Activated CD4-positive, alpha-beta memory T cell treated with anti-CD3 and anti-CD28 coated beads for 36 hours (primary cell): ENCODE measurements at regions of chrX and their contacts with region 1.

Region 1: DNA sequence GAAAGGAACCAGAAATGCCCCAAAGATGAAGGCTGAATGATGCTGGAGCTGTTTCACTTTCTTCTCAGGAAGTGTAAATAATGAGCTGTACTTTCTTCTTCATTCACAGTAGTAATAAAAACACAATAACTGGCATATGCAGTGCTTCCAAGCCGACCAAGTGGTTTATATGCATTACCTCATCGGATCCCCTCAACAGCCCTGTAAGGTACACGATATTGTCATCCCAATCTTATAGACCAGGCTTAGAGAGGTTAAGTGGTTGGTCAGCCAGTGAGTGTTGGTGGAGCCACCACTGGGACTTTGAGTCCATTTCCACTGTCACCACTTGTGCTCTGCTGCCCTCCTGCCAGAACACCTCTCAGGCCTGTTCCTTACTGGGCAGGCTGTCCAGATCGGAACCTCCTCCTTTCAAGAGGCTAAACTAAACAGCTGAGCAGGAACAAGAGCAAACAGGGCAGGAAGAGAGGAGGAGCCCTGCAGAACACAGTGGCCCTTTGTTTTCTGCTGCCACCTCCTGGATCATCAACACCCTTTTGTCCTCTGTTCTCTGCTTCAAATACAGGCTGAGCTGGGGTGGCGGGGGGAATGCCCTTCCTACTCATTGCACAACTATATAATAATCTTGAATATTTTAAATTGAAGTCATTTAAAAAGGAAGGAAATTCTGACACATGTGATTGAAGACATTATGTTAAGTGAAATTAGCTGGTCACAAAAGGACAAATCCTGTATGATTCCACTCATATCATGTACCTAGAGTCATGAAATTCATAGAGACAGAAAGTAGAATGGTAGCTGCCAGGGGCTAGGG is 112.5 kb upstream of the ATP6AP2 start:
- DNase-seq: peak; percentile 68
- H3K4me3 Mint-ChIP-seq: no peak overlapping the region
- H3K27ac Mint-ChIP-seq: no peak overlapping the region
- H3K4me1 Mint-ChIP-seq: peaks cover 29% of the 10 kb centered on the region
- H3K27me3 Mint-ChIP-seq: no peaks in the 10 kb centered on the region

Region 2: DNA sequence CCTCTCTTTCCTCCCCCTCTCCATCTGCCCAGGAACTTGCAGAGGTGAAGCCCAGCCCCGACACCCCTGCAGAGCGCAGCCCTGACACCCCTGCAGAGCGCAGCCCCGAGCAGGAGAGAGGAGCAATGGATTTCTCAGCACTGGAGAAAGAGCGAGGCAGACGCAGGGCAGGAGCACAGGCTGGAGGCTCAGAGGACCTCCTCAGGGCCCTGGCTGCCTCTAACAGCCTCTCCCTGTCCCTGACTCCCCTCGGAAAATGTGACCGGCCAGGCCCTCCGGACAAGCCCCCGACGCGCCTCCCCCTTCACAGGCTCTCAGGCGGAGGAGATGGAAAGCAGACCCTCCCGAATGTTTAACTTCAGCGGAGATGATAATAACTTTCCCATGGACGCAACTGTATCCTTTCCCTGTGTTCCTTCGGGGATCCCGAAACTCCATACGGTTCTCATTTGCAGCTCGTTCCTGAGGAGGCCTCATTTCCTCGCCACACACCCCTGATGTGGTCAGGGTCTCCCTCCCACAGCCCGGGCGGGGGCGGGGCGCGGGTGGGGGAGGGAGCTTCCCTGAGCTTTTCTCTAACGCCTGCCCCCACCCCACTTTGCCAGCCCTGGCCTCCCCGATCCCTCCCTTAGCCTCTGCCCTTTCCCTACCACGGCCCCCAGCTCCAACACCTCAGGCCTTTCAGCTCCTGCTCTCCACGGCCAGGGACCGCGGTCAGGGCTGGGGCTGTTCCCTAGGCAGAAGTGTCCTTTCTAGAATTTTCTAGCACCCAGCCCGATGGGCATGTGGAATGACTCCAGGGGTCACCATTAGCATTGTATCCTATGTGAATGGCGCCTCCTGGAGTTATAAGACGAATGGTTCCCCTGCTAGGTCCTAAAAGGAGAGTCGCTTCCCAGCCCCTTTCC is 169.4 kb before region 1 on chrX:
- CTCF ChIA-PET with region 1: interaction called, 10 read pairs
- POLR2A ChIA-PET with region 1: no interaction called
- intact Hi-C with region 1: loop called (anchors 5 kb)
- DNase-seq: no peak
- H3K4me3 Mint-ChIP-seq: no peak overlapping the region
- H3K27ac Mint-ChIP-seq: no peak overlapping the region
- H3K4me1 Mint-ChIP-seq: peaks cover 30% of the 10 kb centered on the region
- H3K27me3 Mint-ChIP-seq: peaks cover 2% of the 10 kb centered on the region

Region 3: GRCh38 chrX:40439625-40440532 is 28.4 kb before region 1 on chrX:
- CTCF ChIA-PET with region 1: no interaction called
- POLR2A ChIA-PET with region 1: no interaction called
- intact Hi-C with region 1: no loop called
- DNase-seq: peak; percentile 19
- H3K4me3 Mint-ChIP-seq: no peak overlapping the region
- H3K27ac Mint-ChIP-seq: no peak overlapping the region
- H3K4me1 Mint-ChIP-seq: peaks cover 5% of the 10 kb centered on the region
- H3K27me3 Mint-ChIP-seq: no peaks in the 10 kb centered on the region